GM10248 (cell line): ENCODE measurements at regions of chr16 and their contacts with region 1.

Region 1: GRCh38 chr16:67428146-67428731 is 2.7 kb upstream of the HSD11B2 start:
- DNase-seq: peak; percentile 83
- CTCF ChIP-seq: peak; percentile 93

Region 2: GRCh38 chr16:67260426-67261075 is 167.7 kb before region 1 on chr16:
- CTCF ChIA-PET with region 1: interaction called, 14 read pairs
- POLR2A ChIA-PET with region 1: no interaction called
- DNase-seq: peak; percentile 74
- CTCF ChIP-seq: peak; percentile 71

Region 3: GRCh38 chr16:67415872-67416793 is 12.1 kb before region 1 on chr16 and contains the start of gene ZDHHC1:
- CTCF ChIA-PET with region 1: interaction called, 44 read pairs
- POLR2A ChIA-PET with region 1: interaction called, 3 read pairs
- DNase-seq: peak; percentile 87
- CTCF ChIP-seq: peak; percentile 76

Region 4: GRCh38 chr16:67447508-67448076 is 19.4 kb after region 1 on chr16:
- CTCF ChIA-PET with region 1: interaction called, 106 read pairs
- POLR2A ChIA-PET with region 1: no interaction called
- DNase-seq: peak; percentile 79
- CTCF ChIP-seq: peak; percentile 62

Region 5: DNA sequence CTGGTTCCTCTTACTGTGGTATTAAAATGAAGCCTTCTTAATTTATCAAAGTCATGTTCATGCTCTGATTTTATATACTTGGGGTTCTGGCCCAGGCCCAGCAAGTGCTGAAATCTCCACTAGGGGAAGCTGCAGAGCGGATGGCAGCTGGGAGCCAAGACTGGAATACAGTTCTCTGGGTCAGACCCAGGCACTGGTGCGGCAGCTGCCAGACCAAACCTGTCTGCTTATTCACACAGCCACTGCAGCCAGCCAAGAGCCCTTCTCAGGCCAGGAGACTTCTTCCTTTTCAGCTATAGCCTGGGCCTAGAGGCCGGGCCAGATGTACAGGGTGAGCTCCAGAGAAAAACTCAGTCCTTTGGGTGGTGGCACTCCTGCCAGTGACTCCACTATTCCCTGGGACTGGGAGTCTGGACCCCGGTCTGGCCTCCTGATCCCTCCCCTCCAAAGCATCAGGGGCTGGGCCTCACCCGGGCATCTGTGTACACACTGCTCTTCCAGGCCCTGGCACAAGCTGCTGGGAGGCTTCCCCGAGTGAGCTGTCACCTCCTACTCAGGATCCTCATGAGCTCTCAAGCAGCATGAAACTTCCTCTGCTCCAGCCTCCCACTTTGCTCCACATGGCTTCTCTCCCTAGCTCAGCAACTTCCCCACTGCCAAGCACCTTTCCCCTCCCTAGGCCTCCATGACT is 28.3 kb after region 1 on chr16:
- CTCF ChIA-PET with region 1: interaction called, 118 read pairs
- POLR2A ChIA-PET with region 1: no interaction called
- DNase-seq: peak; percentile 26
- CTCF ChIP-seq: no peak

Region 6: DNA sequence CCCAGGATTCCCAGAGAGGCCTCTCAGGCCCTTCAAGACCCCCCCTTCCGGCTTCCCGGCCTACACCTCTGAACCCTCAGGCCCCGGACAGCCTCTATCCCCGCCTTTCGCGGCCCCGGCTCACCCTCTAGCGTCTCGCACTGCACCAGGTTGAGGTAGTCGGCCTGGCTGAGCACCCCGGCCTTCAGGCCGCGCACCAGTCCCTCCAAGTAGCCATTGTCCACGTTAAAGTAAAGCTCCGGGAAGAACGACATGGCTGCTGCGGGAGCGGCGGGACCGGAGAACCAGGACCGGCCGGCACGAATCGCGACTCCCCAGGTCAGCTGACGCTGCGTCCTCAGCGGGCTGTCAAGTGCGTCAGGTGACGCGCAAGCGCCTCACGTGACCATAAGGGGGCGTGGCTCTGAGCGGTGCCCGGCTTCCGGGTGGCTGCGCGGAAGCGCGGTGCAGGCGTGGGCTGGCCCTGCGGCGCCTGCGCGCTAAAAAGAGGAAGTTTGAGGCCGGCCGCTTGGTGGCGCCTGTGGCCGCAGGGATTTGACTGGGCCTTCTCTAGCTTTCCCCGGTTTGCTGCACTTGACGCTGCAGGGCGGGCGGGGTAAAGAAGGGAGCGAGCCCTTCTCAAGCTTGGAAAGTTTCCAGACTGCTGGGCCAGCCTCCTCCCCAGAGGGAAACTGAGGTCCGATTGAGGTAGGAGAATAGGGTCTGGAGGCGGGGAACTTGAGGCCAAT is 52.8 kb after region 1 on chr16 and contains the start of gene ATP6V0D1:
- CTCF ChIA-PET with region 1: interaction called, 30 read pairs
- POLR2A ChIA-PET with region 1: no interaction called
- DNase-seq: peak; percentile 99
- CTCF ChIP-seq: peak; percentile 90

Region 7: DNA sequence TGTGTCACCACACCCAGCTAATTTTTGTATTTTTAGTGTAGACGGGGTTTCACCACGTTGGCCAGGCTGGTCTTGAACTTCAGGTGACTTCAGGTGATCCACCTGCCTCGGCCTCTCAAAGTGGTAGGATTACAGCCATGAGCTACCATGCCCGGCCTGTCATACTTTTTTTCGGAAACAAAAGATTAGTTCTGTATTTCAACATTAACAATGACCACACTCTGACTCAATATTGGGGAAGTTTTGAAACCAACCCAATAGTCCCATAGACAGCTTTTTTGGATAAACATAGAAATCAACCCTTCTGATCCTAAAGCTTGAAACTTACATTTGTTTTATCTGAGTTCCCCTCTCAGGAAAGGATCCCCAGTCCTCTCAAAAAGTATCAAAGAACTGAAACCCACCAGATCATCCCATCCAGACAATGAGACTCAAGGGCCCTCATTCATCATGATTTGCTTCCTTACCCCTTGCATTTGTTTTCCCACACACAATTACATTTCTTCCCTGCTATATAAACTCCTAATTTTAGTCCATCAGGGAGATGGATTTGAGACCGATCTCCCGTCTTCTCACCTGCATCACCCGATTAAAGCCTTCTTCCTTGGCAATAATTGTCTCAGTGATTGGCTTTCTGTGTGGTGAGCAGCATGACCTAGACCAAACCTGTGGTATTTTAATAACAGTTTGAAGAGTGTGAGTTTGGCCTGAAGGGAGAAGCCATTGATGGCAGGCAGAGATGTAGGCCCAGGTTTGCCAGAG is 62.3 kb after region 1 on chr16:
- CTCF ChIA-PET with region 1: interaction called, 11 read pairs
- POLR2A ChIA-PET with region 1: no interaction called
- DNase-seq: no peak
- CTCF ChIP-seq: no peak